K562 (cell line): ENCODE measurements at regions of chr1 and their contacts with region 1.

Region 1: DNA sequence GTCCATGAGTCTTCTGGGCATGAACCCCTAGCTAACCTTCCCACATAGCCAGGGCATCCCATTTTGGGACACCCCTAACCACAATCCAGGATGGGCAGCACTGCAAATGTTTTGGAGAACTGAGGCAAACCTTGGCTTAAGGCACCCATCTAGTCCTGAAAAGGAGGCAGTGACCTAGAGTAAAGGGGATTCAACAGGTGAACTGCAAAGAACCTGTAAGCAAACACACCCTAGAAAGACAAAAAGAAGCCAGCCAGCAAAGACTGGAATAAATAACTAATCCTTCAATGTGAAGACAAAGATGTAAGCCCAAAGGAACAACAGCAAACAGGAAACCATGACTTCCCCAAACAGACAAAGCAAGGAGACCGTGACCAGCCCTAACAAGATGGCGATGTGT is 56.8 kb upstream of the PPIH start:
- DNase-seq: no peak
- ATAC-seq: no peak
- H3K4me3 ChIP-seq: no peak overlapping the region
- H3K27ac ChIP-seq: no peak overlapping the region
- H3K4me1 ChIP-seq: no peaks in the 10 kb centered on the region
- H3K27me3 ChIP-seq: peaks cover 0 to 7% of the 10 kb centered on the region in 2 experiments; a peak in 2 of 5 replicates
- CTCF ChIP-seq: no peak
- EP300 ChIP-seq: no peak
- POLR2A ChIP-seq: no peak
- RAD21 ChIP-seq: no peak

Region 2: GRCh38 chr1:42618866-42619265 is 17.4 kb after region 1 on chr1:
- CTCF ChIA-PET with region 1: no interaction called
- POLR2A ChIA-PET with region 1: interaction called, 10 read pairs
- in situ Hi-C with region 1: no loop called
- intact Hi-C with region 1: no loop called
- DNase-seq: no peak
- ATAC-seq: no peak
- H3K4me3 ChIP-seq: no peak overlapping the region
- H3K27ac ChIP-seq: no peak overlapping the region
- H3K4me1 ChIP-seq: no peaks in the 10 kb centered on the region
- H3K27me3 ChIP-seq: peaks cover 14 to 15% of the 10 kb centered on the region in 2 experiments
- CTCF ChIP-seq: no peak
- EP300 ChIP-seq: no peak
- POLR2A ChIP-seq: no peak
- RAD21 ChIP-seq: no peak